AG04449 (cell line): ENCODE measurements at regions of chr6 and their contacts with region 1.

Region 1: DNA sequence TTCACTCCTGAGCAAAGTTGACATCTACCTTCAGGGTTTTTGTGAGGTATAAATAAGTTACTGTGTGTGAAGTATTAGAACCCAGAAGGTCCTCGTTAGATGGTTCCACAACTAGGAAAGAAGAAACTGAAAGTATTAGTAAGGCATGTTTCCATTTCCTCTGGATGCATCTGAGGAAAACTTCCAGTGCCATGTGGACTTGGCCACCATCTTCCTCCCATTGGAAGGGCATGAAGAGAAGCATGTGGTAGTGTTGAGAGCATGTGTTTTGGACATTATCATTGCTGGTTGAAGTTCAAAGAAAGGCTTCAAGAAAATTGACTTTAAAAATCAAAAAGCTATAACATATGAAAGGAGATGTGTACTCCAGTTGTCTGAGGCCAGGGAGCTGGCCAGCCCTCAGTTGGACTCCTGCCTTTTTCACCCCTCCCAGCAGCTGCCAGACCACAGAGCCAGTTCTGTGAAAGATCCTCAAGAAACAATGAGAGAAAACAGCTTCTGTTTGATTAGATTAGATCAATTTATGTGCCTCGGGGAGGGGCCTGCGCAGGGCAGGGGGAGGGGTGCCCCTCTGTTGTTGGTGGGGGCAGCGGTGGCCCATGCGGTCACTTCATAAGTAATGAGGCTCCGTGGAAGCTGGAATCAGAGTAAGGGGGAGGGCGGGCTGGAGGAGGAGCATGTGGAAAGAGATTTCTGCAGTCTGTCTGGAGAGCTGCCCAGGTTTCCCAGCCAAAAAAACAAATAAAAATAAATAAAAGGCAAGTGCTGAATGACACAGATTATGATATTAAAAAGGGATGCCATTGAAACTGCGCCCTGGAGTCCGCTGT is 154.0 kb downstream of the JARID2 start:
- DNase-seq: no peak
- H3K4me3 ChIP-seq: peak overlapping the region; percentile 37
- CTCF ChIP-seq: no peak

Region 2: DNA sequence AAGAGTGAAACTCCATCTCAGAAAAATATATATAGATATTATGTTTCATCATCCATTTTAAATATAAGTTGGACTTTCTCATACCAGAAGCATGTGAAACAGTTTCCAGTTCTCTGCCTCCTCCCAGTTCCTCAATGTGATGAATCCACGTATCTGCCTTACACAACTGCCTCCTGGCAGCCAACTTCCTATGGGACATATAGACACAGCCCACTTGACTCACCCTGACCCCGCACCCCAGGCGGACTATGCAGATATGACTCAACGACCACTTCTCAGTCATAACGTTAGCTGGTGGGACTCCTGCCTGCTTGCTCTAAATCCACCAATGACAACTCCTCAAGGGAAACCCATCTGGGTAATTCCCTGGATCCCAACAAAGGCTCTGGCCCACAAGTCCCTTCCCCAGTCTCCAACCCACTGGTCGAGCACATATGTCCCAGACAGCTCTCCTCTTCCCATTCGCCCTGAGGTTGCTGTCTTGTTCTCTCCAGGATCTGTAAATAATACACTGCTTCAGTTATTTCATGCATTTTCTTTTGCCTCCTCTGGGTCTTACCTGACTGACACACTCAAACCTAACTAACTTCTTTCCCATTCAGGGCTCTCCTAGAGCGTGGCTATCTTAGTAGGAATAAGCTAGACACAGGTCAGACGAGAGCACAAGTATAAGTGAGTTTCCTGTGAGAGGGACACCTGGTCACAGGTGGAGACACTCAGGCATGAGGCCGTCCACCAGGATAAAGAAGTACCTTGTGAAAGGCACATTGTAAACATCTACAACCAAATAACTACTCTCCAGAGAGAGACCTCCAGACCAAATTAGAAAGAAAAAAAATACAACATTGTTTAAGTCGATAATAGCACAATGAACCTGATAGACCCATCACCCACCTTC is 733.8 kb before region 1 on chr6:
- CTCF ChIA-PET with region 1: no interaction called
- POLR2A ChIA-PET with region 1: no interaction called
- DNase-seq: peak; percentile 94
- H3K4me3 ChIP-seq: no peak overlapping the region
- CTCF ChIP-seq: no peak

Region 3: GRCh38 chr6:15378866-15379265 is 21.0 kb before region 1 on chr6:
- CTCF ChIA-PET with region 1: no interaction called
- POLR2A ChIA-PET with region 1: no interaction called
- DNase-seq: no peak
- H3K4me3 ChIP-seq: no peak overlapping the region
- CTCF ChIP-seq: no peak

Region 4: DNA sequence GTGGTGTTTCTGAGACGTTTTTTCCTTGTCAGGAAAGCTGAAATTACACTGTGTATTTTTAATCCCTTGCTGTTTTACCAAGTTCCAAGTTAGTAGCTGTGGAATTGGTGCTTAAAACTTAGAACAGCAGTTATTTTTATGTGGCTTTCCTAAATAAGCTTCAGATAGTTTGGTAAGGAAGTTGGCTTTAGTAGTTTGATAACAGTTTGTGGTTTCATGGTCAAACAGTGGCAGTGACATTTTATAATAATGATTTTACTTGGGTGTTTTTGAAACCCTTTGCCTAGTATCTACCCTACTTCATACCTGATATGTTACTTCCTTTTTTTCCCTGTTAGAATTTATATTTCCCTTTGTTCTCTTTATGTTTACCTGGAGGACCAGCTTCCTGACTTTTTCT is 10.9 kb after region 1 on chr6:
- CTCF ChIA-PET with region 1: interaction called, 10 read pairs
- POLR2A ChIA-PET with region 1: no interaction called
- DNase-seq: no peak
- H3K4me3 ChIP-seq: no peak overlapping the region
- CTCF ChIP-seq: no peak

Region 5: GRCh38 chr6:15588971-15589634 is 189.2 kb after region 1 on chr6:
- CTCF ChIA-PET with region 1: no interaction called
- POLR2A ChIA-PET with region 1: no interaction called
- DNase-seq: peak; percentile 55
- H3K4me3 ChIP-seq: no peak overlapping the region
- CTCF ChIP-seq: no peak